Ascending aorta (tissue), 2 donors: ENCODE measurements at regions of chr12 and their contacts with region 1.

Region 1: GRCh38 chr12:46364777-46365580 is 7.6 kb downstream of the SLC38A2 start:
- DNase-seq: peak in 1 of 2 donors; percentile 78
- H3K4me3 ChIP-seq: peak overlapping the region; percentile 34 to 98
- H3K27ac ChIP-seq: peak overlapping the region in 1 of 2 donors; percentile 50
- H3K4me1 ChIP-seq: peaks cover 20 to 62% of the 10 kb centered on the region in 2 donors
- H3K27me3 ChIP-seq: no peaks in the 10 kb centered on the region
- CTCF ChIP-seq: no peak

Region 2: GRCh38 chr12:46153268-46153872 is 211.6 kb before region 1 on chr12:
- intact Hi-C with region 1: loop called (anchors 5 kb)
- DNase-seq: no peak
- H3K4me3 ChIP-seq: no peak overlapping the region
- H3K27ac ChIP-seq: no peak overlapping the region
- H3K4me1 ChIP-seq: peaks cover 0 to 4% of the 10 kb centered on the region in 2 donors
- H3K27me3 ChIP-seq: no peaks in the 10 kb centered on the region
- CTCF ChIP-seq: peak; percentile 8 to 73 (median 60)

Region 3: GRCh38 chr12:46219884-46220655 is 144.9 kb before region 1 on chr12:
- intact Hi-C with region 1: loop called (anchors 5 kb)
- DNase-seq: no peak
- H3K4me3 ChIP-seq: peak overlapping the region in 1 of 2 donors; percentile 14
- H3K27ac ChIP-seq: peak overlapping the region in 1 of 2 donors; percentile 64
- H3K4me1 ChIP-seq: peaks cover 23 to 26% of the 10 kb centered on the region in 2 donors
- H3K27me3 ChIP-seq: no peaks in the 10 kb centered on the region
- CTCF ChIP-seq: no peak

Region 4: GRCh38 chr12:46573347-46573658 is 208.3 kb after region 1 on chr12:
- intact Hi-C with region 1: no loop called
- DNase-seq: no peak
- H3K4me3 ChIP-seq: peak overlapping the region in 1 of 2 donors; percentile 12
- H3K27ac ChIP-seq: peak overlapping the region; percentile 3 to 45
- H3K4me1 ChIP-seq: peaks cover 4 to 27% of the 10 kb centered on the region in 2 donors
- H3K27me3 ChIP-seq: no peaks in the 10 kb centered on the region
- CTCF ChIP-seq: no peak